ENCODE measurements at regions of chr4 and their contacts with region 1.

Region 1: DNA sequence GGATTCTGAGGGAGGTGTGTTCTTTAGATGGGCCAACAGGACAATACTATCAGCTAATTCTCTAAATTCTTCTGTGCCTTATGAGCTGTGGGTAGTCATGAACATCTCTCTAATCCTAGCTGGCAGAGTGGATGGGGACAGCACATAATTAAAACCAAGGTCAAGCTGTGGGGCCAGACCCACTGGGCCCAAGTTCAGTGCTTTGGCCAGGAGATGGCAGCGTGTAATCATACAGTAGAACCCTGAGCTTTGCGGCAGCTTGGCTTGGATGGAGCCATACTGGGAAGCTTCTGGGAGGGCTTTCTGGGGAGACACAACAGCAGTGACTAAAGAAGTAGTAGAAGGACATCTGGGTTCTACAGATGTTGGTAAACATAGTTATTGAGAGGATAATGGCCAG is 140.3 kb upstream of the CXCL13 start:
- DNase-seq: peak; percentile 67
- H3K4me3 Mint-ChIP-seq: no peak overlapping the region
- H3K27ac Mint-ChIP-seq: peak overlapping the region; percentile 45
- H3K4me1 Mint-ChIP-seq: peaks cover 5% of the 10 kb centered on the region
- H3K27me3 Mint-ChIP-seq: peaks cover 8% of the 10 kb centered on the region

Region 2: GRCh38 chr4:77263247-77263646 is 202.0 kb before region 1 on chr4:
- intact Hi-C with region 1: no loop called
- DNase-seq: no peak
- H3K4me3 Mint-ChIP-seq: no peak overlapping the region
- H3K27ac Mint-ChIP-seq: no peak overlapping the region
- H3K4me1 Mint-ChIP-seq: no peaks in the 10 kb centered on the region
- H3K27me3 Mint-ChIP-seq: no peaks in the 10 kb centered on the region

Region 3: GRCh38 chr4:77538560-77539157 is 73.4 kb after region 1 on chr4:
- intact Hi-C with region 1: loop called (anchors 5 kb)
- DNase-seq: no peak
- H3K4me3 Mint-ChIP-seq: peak overlapping the region; percentile 43
- H3K27ac Mint-ChIP-seq: peak overlapping the region; percentile 82
- H3K4me1 Mint-ChIP-seq: peaks cover 28% of the 10 kb centered on the region
- H3K27me3 Mint-ChIP-seq: peaks cover 5% of the 10 kb centered on the region

Region 4: DNA sequence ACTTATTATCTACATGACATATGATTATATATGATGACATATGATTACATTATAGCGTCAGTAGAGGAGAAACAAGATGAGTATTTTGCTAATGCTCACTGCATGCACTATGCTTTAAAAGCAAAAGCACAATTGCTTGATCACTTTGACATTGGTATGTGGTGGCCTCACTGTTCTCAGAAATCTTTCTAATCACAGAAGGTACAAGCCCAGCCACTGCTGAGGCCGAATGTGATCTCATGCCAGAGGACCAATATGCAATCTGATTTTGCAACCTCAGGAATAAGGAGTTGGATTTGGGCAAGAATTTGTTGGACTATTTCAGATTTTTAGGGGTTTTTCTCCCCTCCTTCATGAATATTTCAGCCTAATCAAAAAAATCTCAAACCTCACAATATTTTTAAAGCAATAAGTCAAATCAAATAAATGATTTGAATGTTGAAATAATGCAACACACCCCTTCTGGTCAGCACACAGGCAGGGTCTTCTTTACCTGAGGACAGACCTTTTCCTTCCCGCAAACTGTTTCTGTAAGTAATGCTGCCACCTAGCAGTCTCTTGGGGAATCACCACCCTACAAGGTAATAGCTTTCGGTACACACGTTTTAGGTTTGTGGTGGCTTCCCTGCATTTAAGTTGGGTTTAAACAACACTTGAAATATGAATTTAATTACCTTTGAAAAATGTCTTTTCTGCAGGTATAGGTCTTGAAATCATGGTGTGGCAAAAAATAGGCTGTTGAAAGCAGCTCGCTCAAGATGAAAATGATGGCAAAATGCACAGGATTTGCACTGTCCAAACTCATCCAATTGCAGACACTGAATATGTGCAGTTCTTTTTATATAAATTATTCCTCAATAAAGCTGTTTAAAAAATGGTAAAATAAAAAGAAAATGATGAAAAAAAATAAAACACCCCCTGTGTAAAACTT is 135.5 kb after region 1 on chr4:
- intact Hi-C with region 1: loop called (anchors 1 kb)
- DNase-seq: peak; percentile 78
- H3K4me3 Mint-ChIP-seq: no peak overlapping the region
- H3K27ac Mint-ChIP-seq: peak overlapping the region; percentile 69
- H3K4me1 Mint-ChIP-seq: peaks cover 31% of the 10 kb centered on the region
- H3K27me3 Mint-ChIP-seq: no peaks in the 10 kb centered on the region

Measured in activated CD4-positive, alpha-beta T cell treated with anti-CD3 and anti-CD28 coated beads, Interleukin-2, amount 10 ng/mL, durations not matched to agents 24 days and 14 days (primary cell).